OCI-LY7 (cell line): ENCODE measurements at regions of chr5 and their contacts with region 1.

Region 1: DNA sequence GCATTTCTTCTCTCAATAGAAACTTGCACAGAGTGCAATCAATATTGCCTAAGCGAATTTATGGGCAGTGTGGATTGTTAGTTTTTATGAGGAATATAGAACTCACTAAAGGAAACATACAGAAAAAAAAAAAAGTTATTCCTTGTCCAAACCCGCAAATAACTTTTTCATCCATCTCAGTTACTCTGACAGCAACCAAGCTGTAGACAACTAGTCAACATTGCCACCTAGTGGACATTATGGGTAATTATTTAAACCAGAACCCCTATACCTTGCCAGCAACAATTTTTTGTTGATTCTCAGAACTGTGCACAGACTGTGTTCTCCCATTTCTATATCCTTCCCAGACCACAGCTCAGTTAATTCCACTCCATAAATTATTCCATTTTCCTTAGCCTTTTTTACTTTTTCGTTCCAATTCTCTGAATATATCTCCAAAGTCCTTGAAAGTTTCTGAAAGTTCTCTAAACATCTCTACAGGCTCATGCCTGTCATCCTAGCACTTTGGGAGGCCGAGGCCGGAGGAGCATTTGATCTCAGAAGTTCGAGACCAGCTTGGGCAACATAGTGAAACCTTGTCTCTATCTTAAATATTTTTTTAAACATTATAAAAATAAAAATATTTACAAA is 2.6 kb upstream of the AFAP1L1 start:
- DNase-seq: peak; percentile 73
- H3K4me3 ChIP-seq: no peak overlapping the region
- H3K27ac ChIP-seq: no peak overlapping the region
- H3K4me1 ChIP-seq: no peaks in the 10 kb centered on the region
- CTCF ChIP-seq: peak; percentile 92

Region 2: GRCh38 chr5:149128023-149128875 is 140.8 kb before region 1 on chr5:
- CTCF ChIA-PET with region 1: no interaction called
- POLR2A ChIA-PET with region 1: no interaction called
- intact Hi-C with region 1: loop called (anchors 5 kb)
- DNase-seq: peak; percentile 8
- H3K4me3 ChIP-seq: no peak overlapping the region
- H3K27ac ChIP-seq: no peak overlapping the region
- H3K4me1 ChIP-seq: no peaks in the 10 kb centered on the region
- CTCF ChIP-seq: peak; percentile 81

Region 3: DNA sequence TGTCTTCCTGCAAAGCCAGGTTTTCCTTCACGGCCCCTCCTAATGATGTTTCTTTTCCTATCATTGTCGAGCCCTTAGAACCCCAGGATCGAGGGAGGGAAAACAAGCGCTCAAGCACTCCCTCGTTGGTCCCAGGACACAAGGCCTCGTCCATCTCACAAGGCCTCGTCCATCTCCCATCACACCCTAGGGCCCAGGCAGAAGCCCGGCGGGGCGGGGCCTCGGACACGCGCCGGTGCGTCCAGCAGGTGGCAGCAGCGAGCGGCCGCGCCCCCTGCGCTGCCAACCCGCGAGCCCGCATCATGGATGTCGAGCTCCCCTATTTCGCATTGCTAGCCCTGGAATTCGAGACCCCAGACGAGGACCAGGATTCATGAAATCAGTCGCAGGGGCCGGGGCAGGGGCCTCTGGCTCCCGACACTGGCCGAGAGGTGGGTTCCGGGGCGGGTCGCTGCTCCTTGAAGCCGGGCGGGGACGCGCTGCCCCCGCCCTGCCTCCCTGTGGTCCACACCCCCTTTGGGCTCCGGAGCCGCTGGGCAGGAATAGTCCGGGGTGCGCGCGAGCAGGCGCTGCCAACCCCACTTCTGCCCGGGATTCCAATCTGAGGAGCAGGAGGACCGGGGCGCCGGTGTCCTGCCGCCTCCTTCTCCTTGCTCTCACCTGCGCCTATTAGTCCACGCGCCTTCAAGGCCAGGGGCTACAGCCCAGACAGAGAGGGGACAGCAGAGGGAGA is 127.7 kb before region 1 on chr5 and contains the start of gene ABLIM3:
- CTCF ChIA-PET with region 1: interaction called, 3 read pairs
- POLR2A ChIA-PET with region 1: no interaction called
- intact Hi-C with region 1: loop called (anchors 5 kb)
- DNase-seq: peak; percentile 47
- H3K4me3 ChIP-seq: peak within 1 kb of the TSS; percentile 15
- H3K27ac ChIP-seq: no peak within 1 kb of the TSS
- H3K4me1 ChIP-seq: no peaks in the 10 kb centered on the region
- CTCF ChIP-seq: peak; percentile 88
- total RNA-seq, gene ABLIM3: not detected in 2 replicates